ENCODE measurements at regions of chr4 and their contacts with region 1.

Region 1: GRCh38 chr4:158253350-158253980 is 43.2 kb downstream of the TMEM144 start:
- DNase-seq: peak; percentile 56 to 71 (median 58)
- ATAC-seq: peak; percentile 71
- H3K4me3 ChIP-seq: no peak overlapping the region
- H3K27ac ChIP-seq: no peak overlapping the region
- H3K4me1 ChIP-seq: peaks cover 13% of the 10 kb centered on the region
- H3K27me3 ChIP-seq: no peaks in the 10 kb centered on the region
- CTCF ChIP-seq: peak; percentile 48 to 75 (median 57)
- POLR2A ChIP-seq: no peak

Region 2: GRCh38 chr4:158314756-158315487 is 61.5 kb after region 1 on chr4:
- intact Hi-C with region 1: no loop called
- DNase-seq: no peak
- ATAC-seq: peak; percentile 81
- H3K4me3 ChIP-seq: no peak overlapping the region
- H3K27ac ChIP-seq: peak overlapping the region in 1 of 4 donors; percentile 16
- H3K4me1 ChIP-seq: peaks cover 8% of the 10 kb centered on the region
- H3K27me3 ChIP-seq: no peaks in the 10 kb centered on the region
- CTCF ChIP-seq: no peak
- POLR2A ChIP-seq: no peak

Region 3: GRCh38 chr4:158496030-158496741 is 242.7 kb after region 1 on chr4:
- intact Hi-C with region 1: no loop called
- DNase-seq: peak; percentile 18 to 64 (median 40)
- ATAC-seq: no peak
- H3K4me3 ChIP-seq: no peak overlapping the region
- H3K27ac ChIP-seq: no peak overlapping the region
- H3K4me1 ChIP-seq: no peaks in the 10 kb centered on the region
- H3K27me3 ChIP-seq: no peaks in the 10 kb centered on the region
- CTCF ChIP-seq: peak in 6 of 7 experiments; percentile 15 to 49 (median 30)
- POLR2A ChIP-seq: no peak

Region 4: DNA sequence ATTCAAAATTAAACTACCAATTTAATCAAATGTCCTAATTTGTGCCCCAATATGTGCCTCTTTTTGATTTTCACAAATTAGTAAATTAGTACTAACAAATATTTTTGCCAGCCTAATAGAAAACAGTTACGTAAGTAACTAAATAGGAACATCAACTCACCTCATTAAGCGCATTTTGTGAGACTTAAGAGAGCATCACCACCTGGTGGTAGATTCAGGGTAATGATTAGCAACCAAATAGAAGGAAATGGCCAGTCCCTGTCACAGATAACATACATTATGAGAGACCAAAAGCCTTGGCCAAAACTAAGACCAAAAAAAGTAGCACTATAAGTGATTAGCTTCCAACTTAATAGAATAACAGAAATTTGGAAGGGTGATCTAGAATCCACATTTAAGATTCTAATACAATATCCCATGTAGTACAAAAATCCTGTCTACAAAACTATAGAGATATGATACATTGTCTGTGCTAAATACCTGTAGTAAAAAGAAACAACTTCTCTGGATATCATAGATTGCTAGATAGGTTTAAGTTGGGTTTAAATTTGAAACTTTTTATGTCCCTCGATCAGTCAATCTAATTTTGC is 371.5 kb after region 1 on chr4:
- intact Hi-C with region 1: loop called (anchors 10 kb)
- DNase-seq: peak in 3 of 4 donors; percentile 7 to 42 (median 15)
- ATAC-seq: peak; percentile 64
- H3K4me3 ChIP-seq: no peak overlapping the region
- H3K27ac ChIP-seq: no peak overlapping the region
- H3K4me1 ChIP-seq: no peaks in the 10 kb centered on the region
- H3K27me3 ChIP-seq: no peaks in the 10 kb centered on the region
- CTCF ChIP-seq: peak in 6 of 7 experiments; percentile 52 to 78 (median 74)
- POLR2A ChIP-seq: no peak